HCT116 (cell line): ENCODE measurements at regions of chr11 and their contacts with region 1.

Region 1: GRCh38 chr11:111841370-111842053 is 29.9 kb downstream of the ALG9 start:
- DNase-seq: peak; percentile 64
- ATAC-seq: peak; percentile 97
- H3K4me3 ChIP-seq: no peak overlapping the region
- H3K27ac ChIP-seq: no peak overlapping the region
- H3K4me1 ChIP-seq: 0 out of 4 replicates have a peak, but pooled peaks cover 0 to 2% of the 10 kb centered on the region in 2 experiments
- H3K27me3 ChIP-seq: no peaks in the 10 kb centered on the region
- CTCF ChIP-seq: peak; percentile 78 to 93 (median 83)
- POLR2A ChIP-seq: no peak
- RAD21 ChIP-seq: peak; percentile 90

Region 2: GRCh38 chr11:111454561-111455192 is 386.8 kb before region 1 on chr11:
- CTCF ChIA-PET with region 1: no interaction called
- POLR2A ChIA-PET with region 1: no interaction called
- RAD21 ChIA-PET with region 1: no interaction called
- intact Hi-C with region 1: loop called (anchors 2 kb)
- DNase-seq: no peak
- ATAC-seq: peak; percentile 85
- H3K4me3 ChIP-seq: no peak overlapping the region
- H3K27ac ChIP-seq: no peak overlapping the region
- H3K4me1 ChIP-seq: no peaks in the 10 kb centered on the region
- H3K27me3 ChIP-seq: peaks cover 5% of the 10 kb centered on the region; the same call in 1 of the 2 replicates
- CTCF ChIP-seq: peak in 2 of 3 experiments; percentile 32 to 48; a peak in 4 of 6 replicates
- POLR2A ChIP-seq: no peak
- RAD21 ChIP-seq: peak; percentile 60

Region 3: GRCh38 chr11:111565114-111565720 is 276.3 kb before region 1 on chr11:
- CTCF ChIA-PET with region 1: interaction called, 9 read pairs
- POLR2A ChIA-PET with region 1: no interaction called
- RAD21 ChIA-PET with region 1: no interaction called
- intact Hi-C with region 1: loop called (anchors 1 kb)
- DNase-seq: peak; percentile 63
- ATAC-seq: peak; percentile 70
- H3K4me3 ChIP-seq: no peak overlapping the region
- H3K27ac ChIP-seq: no peak overlapping the region
- H3K4me1 ChIP-seq: peaks cover 0 to 7% of the 10 kb centered on the region in 2 experiments; a peak in 1 of 4 replicates
- H3K27me3 ChIP-seq: no peaks in the 10 kb centered on the region
- CTCF ChIP-seq: peak; percentile 81 to 87 (median 84)
- POLR2A ChIP-seq: no peak
- RAD21 ChIP-seq: peak; percentile 91

Region 4: GRCh38 chr11:111586388-111586831 is 255.1 kb before region 1 on chr11:
- CTCF ChIA-PET with region 1: interaction called, 14 read pairs
- POLR2A ChIA-PET with region 1: no interaction called
- RAD21 ChIA-PET with region 1: interaction called in 1 of 2 experiments, 3 read pairs
- intact Hi-C with region 1: loop called (anchors 1 kb)
- DNase-seq: peak; percentile 55
- ATAC-seq: peak; percentile 81
- H3K4me3 ChIP-seq: no peak overlapping the region
- H3K27ac ChIP-seq: no peak overlapping the region
- H3K4me1 ChIP-seq: no peaks in the 10 kb centered on the region
- H3K27me3 ChIP-seq: no peaks in the 10 kb centered on the region
- CTCF ChIP-seq: peak; percentile 58 to 82 (median 72); a peak in 5 of 6 replicates
- POLR2A ChIP-seq: no peak
- RAD21 ChIP-seq: peak; percentile 87

Region 5: DNA sequence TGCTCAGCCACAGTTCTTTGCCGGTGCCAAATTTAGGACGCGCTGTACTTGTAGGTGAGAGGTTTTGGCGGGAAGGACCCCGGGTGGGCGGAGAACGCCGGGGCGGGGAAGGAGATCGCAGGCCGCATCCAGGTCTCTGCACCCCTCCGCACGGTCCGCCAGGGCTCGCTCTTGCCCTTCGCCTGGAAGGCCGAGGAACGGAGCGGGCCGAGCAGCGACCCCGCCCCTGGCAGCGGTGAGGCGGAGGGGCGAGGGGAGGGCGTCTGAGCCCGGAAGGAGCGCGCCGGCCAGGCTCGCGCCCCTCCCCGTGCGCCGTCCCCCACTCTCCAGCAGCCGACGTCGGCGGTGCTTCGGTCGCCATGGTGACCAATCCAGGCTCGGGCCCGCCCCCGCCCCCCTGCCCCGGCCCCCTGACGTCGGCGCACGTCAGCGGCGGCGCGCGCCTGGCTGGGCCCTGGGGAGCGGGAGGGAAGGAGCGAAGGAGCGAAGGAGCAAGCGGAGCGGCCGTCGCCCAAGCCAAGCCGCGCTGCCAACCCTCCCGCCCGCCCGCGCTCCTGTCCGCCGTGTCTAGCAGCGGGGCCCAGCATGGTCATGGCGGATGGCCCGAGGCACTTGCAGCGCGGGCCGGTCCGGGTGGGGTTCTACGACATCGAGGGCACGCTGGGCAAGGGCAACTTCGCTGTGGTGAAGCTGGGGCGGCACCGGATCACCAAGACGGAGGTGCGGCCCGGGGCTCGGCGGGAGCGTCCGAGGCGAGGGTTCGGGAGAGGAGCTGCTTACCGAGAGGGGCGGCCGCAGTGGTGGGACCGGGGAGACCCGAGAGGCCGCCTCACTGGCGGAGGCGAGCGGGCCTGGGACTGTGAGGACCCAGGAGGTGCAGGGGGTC is 239.3 kb before region 1 on chr11 and contains the start of gene SIK2:
- CTCF ChIA-PET with region 1: interaction called, 5 read pairs
- POLR2A ChIA-PET with region 1: no interaction called
- RAD21 ChIA-PET with region 1: no interaction called
- intact Hi-C with region 1: loop called (anchors 1 kb)
- DNase-seq: peak; percentile 87
- ATAC-seq: peak; percentile 88
- H3K4me3 ChIP-seq: peak within 1 kb of the TSS; percentile 73 to 76
- H3K27ac ChIP-seq: peak within 1 kb of the TSS; percentile 72; the same call in 1 of the 2 replicates
- H3K4me1 ChIP-seq: peaks cover 9 to 27% of the 10 kb centered on the region in 2 experiments; a peak in 3 of 4 replicates
- H3K27me3 ChIP-seq: no peaks in the 10 kb centered on the region
- CTCF ChIP-seq: peak; percentile 72 to 94 (median 83)
- POLR2A ChIP-seq: no peak
- RAD21 ChIP-seq: peak; percentile 100
- total RNA-seq, gene SIK2: 13.0 TPM

Region 6: DNA sequence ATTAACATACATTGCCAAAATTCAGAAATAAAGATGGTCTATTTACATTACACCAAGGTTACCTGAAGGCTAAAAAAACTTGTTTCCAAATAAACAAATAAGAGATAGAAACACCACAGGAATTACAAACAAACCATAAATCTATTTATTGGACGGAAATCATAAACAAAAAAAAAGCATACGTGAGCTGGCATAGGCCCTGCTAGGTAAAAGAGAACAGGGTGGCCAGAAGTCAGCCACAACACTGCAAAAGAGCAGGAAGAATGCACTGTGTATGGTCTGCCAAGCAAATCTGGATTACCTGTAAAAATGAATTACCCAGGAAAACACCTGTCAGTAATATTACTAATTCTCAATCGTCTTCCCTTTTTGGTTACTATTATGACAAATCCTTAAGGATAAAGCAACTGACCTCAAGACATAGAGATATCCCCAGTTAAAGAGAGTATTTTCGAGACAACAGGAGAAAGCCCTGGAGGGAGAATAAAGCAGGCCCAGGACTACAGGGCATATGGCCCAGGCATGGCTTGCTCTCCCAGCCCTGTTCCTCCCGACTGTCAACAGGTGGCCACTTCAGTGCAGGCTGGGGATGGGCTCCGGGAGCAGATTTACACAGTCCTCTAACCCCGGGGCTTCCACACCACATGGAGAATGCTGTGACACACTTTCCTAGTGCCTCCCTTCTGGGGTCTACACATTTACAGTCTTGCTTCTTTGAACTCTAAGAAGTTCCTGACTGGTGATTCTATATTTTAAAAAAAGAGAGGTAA is 93.3 kb before region 1 on chr11:
- CTCF ChIA-PET with region 1: no interaction called
- POLR2A ChIA-PET with region 1: no interaction called
- RAD21 ChIA-PET with region 1: no interaction called
- intact Hi-C with region 1: no loop called
- DNase-seq: no peak
- ATAC-seq: no peak; the same call in 1 of the 2 replicates
- H3K4me3 ChIP-seq: no peak overlapping the region
- H3K27ac ChIP-seq: no peak overlapping the region
- H3K4me1 ChIP-seq: peaks cover 0 to 13% of the 10 kb centered on the region in 2 experiments; a peak in 2 of 4 replicates
- H3K27me3 ChIP-seq: no peaks in the 10 kb centered on the region
- CTCF ChIP-seq: no peak
- POLR2A ChIP-seq: no peak
- RAD21 ChIP-seq: no peak